Posterior vena cava (tissue), 2 donors: ENCODE measurements at regions of chr7 and their contacts with region 1.

Region 1: GRCh38 chr7:151680721-151681209 is 161.1 kb upstream of the RHEB start:
- DNase-seq: peak; percentile 86

Region 2: DNA sequence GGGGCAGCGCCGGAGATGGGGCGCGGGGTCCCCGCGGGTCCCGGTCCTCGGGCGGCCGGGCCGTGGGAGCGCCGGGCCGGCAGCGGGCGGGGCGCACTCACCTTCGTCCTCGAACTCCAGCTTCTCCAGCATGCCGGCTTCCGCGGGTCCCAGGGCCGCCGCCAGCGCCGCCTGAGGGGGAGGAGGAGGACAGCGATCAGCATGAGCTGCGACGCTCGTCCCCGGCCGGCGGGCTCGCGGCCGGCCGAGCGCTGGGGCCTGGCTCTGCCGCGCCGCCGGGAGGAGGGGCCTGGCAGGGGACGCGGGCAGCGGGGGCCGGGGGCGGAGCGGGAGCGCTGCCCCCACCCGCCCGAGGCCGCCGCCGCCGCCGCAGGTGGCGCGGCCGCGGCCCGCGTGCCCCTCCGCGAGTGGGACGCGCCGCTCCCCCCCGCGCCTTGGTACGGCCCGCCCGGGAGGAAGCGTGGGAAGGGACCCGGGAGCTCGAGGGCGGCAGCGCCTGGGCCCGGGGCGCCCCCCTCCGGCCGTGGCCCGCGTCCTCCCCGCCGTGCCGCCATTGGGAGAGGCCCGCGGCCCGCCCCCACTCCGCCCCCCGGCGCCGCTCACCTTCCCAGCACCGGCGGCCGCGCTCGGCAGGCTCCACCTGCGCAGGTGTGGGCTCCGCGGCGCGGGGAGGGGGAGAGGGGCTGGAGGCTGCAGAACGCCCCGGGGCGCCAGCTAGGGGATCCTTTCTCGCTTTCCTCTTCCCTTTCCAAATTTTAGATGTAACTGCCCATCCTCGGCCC is 48.6 kb before region 1 on chr7:
- intact Hi-C with region 1: loop called in 1 of 2 experiments (anchors 1 kb)
- DNase-seq: peak; percentile 92

Region 3: GRCh38 chr7:151705636-151706276 is 25.0 kb after region 1 on chr7:
- intact Hi-C with region 1: loop called in 1 of 2 experiments (anchors 1 kb)
- DNase-seq: no peak